ENCODE measurements at regions of chr20 and their contacts with region 1.

Region 1: DNA sequence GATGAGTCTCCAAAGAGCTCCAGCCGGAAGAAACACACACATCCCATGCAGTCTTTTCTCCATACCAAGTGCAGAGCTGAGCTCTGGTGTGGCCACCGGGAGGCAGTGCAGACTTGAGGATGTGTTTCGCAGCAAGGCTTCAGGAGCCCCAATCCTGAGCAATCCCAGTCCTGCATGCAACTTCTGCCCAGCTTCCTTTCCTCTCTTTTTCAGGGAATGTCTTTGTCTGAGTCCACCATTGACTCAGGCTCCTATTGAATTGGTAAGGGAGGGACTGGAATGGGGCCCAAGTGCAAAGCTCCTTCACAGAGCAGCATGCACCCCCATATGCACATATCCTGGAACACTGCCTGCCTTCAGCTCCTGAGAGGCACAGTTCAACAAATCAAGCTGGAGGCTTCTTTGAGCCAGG is 50.5 kb upstream of the ASIP start:
- DNase-seq: peak; percentile 82
- ATAC-seq: peak; percentile 99
- H3K4me3 Mint-ChIP-seq: no peak overlapping the region
- H3K27ac Mint-ChIP-seq: no peak overlapping the region
- H3K4me1 Mint-ChIP-seq: peaks cover 22% of the 10 kb centered on the region
- H3K27me3 Mint-ChIP-seq: no peaks in the 10 kb centered on the region
- CTCF ChIP-seq: peak; percentile 49; the same call in 1 of the 2 replicates

Region 2: DNA sequence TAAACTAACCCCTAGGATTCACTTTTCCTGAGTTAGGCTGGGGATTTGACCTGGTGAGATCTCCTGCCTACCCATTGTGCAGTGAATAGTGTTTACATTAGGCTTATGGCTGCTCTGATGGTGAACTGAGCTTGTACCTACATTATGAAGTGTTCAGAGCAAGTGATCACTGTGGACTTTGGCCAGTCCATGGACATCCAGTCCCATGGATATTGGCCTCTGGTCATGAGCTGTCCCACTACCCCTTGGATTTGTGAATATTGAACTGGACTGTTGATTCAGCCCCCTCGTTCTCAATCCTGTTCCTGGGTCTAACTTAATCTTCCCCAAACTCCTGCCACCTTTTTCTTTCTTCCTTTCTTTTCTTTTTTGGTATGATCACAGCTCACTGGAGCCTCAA is 64.3 kb after region 1 on chr20:
- CTCF ChIA-PET with region 1: interaction called, 56 read pairs
- POLR2A ChIA-PET with region 1: no interaction called
- DNase-seq: no peak
- ATAC-seq: no peak
- H3K4me3 Mint-ChIP-seq: no peak overlapping the region
- H3K27ac Mint-ChIP-seq: no peak overlapping the region
- H3K4me1 Mint-ChIP-seq: peaks cover 14% of the 10 kb centered on the region
- H3K27me3 Mint-ChIP-seq: no peaks in the 10 kb centered on the region
- CTCF ChIP-seq: no peak

Region 3: DNA sequence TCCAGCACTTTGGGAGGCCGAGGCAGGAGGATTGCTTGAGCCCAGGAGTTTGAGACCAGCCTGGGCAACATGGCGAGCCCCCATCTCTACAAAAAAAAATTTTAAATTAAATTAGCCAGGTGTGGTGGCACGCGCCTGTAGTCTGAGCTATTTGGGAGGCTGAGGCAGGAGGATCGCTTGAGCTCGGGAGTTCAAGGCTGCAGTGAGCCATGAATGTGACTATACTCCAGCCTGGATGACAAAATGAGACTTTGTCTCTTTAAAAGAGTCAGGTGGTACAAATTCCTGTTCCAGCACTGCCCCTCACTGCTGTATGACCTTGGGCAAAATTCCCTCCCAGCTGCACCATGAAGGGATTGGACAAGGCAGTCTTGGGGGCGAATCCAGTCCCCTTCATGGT is 84.0 kb after region 1 on chr20:
- CTCF ChIA-PET with region 1: interaction called, 33 read pairs
- POLR2A ChIA-PET with region 1: interaction called, 3 read pairs
- DNase-seq: no peak
- ATAC-seq: no peak
- H3K4me3 Mint-ChIP-seq: no peak overlapping the region
- H3K27ac Mint-ChIP-seq: no peak overlapping the region
- H3K4me1 Mint-ChIP-seq: no peaks in the 10 kb centered on the region
- H3K27me3 Mint-ChIP-seq: no peaks in the 10 kb centered on the region
- CTCF ChIP-seq: no peak

Region 4: GRCh38 chr20:34522969-34523871 is 332.5 kb after region 1 on chr20:
- CTCF ChIA-PET with region 1: interaction called, 26 read pairs
- POLR2A ChIA-PET with region 1: no interaction called
- DNase-seq: peak; percentile 83
- ATAC-seq: peak; percentile 97
- H3K4me3 Mint-ChIP-seq: no peak overlapping the region
- H3K27ac Mint-ChIP-seq: peak overlapping the region; percentile 84
- H3K4me1 Mint-ChIP-seq: peaks cover 12% of the 10 kb centered on the region
- H3K27me3 Mint-ChIP-seq: no peaks in the 10 kb centered on the region
- CTCF ChIP-seq: peak; percentile 41; the same call in 1 of the 2 replicates

Region 5: DNA sequence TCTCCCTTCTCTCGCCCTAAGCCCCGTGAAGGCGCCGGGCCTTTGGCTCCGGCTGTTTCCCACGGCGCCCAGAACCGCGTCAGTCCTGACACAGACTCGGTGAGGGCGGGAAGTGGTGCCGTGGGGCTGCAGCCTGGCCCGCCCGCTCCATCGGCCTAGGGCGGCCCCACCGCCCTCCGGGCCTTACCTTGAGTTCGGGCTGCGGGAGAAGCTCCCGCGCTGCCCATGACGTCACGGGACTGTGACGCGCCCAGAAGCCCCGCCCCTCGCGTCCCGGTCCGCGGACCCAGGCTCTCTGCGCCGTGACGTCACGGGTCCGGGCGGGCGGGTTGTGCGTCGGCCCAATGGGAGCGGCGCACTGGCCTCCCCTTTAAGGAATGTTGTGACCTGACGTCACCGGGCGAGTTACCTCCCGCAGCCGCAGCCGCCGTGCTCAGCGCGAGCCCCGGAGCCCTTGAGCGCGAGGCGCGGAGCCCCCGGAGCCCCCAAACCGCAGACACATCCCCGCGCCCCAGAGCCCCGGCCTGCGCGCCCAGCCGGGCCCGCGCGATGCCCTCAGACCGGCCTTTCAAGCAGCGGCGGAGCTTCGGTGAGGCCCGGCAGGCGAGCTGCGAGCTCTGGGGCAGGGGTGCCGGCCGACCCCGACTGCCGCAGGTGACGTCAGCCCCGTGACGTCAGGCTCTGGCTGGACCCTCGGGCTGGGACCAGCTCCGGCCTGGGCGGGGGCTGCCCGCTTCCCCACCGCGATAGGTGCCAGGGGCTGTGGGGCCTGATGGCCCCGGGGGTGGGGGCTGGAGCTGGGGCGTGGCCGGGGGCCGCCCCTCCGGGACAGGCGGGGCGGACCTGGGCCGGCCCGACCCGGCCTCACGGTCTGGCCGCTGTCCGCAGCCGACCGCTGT is 367.9 kb after region 1 on chr20 and contains the start of gene MAP1LC3A:
- CTCF ChIA-PET with region 1: interaction called, 11 read pairs
- POLR2A ChIA-PET with region 1: no interaction called
- DNase-seq: peak; percentile 95
- ATAC-seq: peak; percentile 75
- H3K4me3 Mint-ChIP-seq: peak within 1 kb of the TSS; percentile 75
- H3K27ac Mint-ChIP-seq: peak within 1 kb of the TSS; percentile 44
- H3K4me1 Mint-ChIP-seq: peaks cover 4% of the 10 kb centered on the region
- H3K27me3 Mint-ChIP-seq: peaks cover 7% of the 10 kb centered on the region
- CTCF ChIP-seq: no peak
- total RNA-seq, gene MAP1LC3A: 7.5 to 12.1 TPM (median 11.3 TPM) in 3 replicates